Posterior cingulate gyrus (tissue), 11 donors: ENCODE measurements at regions of chr14 and their contacts with region 1.

Region 1: GRCh38 chr14:22766456-22767322 is at the start of gene OXA1L:
- DNase-seq: peak; percentile 91 to 98 (median 96)

Region 2: DNA sequence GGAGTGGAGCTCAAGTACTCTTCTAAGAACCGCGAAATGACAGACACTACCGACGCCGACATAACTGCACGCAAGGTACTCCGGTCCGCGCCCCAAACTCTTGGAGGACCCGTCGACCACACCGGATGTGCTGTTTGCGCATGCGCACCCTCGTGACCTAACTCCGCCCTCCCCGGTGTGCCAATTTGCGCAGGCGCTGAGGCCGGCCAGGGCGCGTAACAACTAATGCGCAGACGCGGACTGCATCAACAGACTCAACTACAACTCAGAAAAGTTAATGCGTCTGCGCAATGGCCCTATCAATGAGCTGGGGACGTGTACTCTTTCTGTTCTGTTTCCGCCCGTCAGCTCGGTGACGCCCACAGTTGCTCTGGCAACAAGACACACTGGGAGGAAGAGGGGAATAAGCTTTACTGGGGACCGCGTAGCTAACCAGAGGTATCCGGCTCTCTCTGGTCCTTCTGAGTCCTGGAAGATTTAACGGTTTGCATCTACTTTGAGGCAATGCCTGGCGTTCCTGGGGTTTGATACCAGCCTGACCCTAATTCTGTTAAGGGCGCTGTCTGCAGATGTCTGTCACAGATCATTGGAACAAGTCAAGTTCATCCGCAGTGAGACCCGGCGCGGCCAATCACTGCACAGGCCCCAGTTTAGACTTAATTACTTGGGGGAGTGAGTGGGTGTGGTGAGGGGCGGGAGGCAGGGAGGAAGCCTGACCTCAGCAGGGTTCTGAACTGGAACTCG is 177.4 kb before region 1 on chr14 and contains the start of gene DAD1:
- intact Hi-C with region 1: loop called (anchors 5 kb)
- DNase-seq: peak; percentile 89 to 99 (median 95)

Region 3: GRCh38 chr14:22829661-22830442 is 63.2 kb after region 1 on chr14 and contains the start of gene MRPL52:
- intact Hi-C with region 1: loop called (anchors 10 kb)
- DNase-seq: peak; percentile 80 to 98 (median 90)